Common myeloid progenitor, CD34-positive (primary cell): ENCODE measurements at regions of chr12 and their contacts with region 1.

Region 1: DNA sequence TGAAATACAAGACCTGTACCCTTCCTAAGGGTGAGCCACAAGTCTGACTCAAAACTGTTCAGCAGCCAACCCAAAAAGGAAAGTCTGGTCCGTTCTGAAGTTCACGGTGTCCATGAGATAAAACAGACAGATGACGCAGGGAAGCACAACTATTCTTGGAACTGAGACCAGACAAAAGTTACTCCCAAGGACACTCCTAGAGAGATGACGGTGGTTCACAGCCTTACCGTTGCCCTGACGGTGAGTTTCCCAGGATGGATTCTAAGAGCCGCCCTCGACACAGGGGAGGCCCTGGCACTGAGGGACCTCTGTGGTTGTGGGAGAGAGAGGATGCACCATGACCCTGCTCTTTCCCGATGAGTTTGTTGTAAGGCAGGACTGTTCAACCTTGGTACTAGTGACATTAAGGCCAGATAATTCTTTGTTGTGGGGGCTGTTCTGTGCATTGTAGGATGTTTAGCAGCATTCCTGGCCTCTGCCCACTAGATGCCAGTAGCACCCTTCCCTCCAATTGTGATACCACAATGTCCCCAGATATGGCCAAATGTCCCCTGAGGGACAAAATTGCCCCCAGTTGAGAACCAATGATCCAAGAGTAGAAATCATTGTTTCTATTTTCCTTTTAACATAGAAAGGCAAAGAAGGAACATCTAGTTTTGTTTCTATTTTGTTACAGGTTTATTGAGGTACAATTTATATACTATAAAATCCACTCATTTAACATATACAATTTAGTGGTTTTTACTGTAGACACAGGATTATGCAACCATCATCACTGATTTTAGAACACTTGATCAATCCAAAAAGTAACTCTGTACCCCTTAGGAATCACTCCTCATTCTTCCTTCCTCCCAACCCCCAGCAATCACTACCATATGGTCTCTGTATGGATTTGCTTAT is 23.0 kb downstream of the OR10P1 start:
- DNase-seq: peak in 2 of 3 donors; percentile 47 to 50
- H3K4me3 ChIP-seq: no peak overlapping the region
- H3K27ac ChIP-seq: no peak overlapping the region
- H3K4me1 ChIP-seq: no peaks in the 10 kb centered on the region
- H3K27me3 ChIP-seq: peaks cover 0 to 10% (median 0%) of the 10 kb centered on the region in 5 experiments

Region 2: GRCh38 chr12:55631733-55632132 is 28.0 kb before region 1 on chr12:
- CTCF ChIA-PET with region 1: interaction called, 11 read pairs
- POLR2A ChIA-PET with region 1: no interaction called
- DNase-seq: no peak
- H3K4me3 ChIP-seq: no peak overlapping the region
- H3K27ac ChIP-seq: no peak overlapping the region
- H3K4me1 ChIP-seq: peaks cover 0 to 11% (median 0%) of the 10 kb centered on the region in 4 experiments
- H3K27me3 ChIP-seq: no peaks in the 10 kb centered on the region